ENCODE measurements at regions of chr12 and their contacts with region 1.

Region 1: DNA sequence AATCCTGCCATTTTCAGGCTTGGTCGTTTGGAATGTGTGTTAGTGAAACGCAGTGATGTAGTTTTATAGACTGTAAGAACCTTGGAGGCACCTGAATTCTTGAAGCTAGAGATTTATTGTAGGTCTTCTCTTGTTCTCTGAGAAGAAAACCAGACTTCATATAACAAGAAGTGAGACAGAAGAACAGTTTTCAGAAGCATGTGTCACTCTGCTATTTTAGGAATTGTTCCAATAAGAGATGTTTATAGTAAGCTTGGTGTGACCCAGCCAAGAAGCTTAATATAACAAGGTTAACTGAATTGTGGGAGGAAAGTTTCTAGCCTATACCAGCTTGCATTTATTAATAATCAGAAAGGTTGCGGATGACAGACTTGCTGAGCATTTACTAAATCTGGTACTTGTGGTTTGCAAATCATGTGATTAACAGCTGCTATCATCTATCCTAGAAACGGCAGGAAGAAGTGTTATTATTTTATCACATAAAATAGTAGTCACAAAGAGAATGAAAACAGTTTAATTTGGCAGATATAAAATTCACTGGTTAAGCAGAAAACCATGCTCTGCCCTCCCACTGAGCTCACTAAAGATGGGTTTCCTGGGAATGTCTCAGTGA is 49.2 kb upstream of the BCAT1 start:
- DNase-seq: no peak
- ATAC-seq: peak; percentile 54
- H3K4me3 ChIP-seq: no peak overlapping the region
- H3K27ac ChIP-seq: no peak overlapping the region
- H3K4me1 ChIP-seq: no peaks in the 10 kb centered on the region
- H3K27me3 ChIP-seq: no peaks in the 10 kb centered on the region

Region 2: GRCh38 chr12:24788886-24789285 is 209.2 kb before region 1 on chr12:
- intact Hi-C with region 1: no loop called
- DNase-seq: no peak
- ATAC-seq: no peak
- H3K4me3 ChIP-seq: no peak overlapping the region
- H3K27ac ChIP-seq: no peak overlapping the region
- H3K4me1 ChIP-seq: no peaks in the 10 kb centered on the region
- H3K27me3 ChIP-seq: no peaks in the 10 kb centered on the region

Region 3: DNA sequence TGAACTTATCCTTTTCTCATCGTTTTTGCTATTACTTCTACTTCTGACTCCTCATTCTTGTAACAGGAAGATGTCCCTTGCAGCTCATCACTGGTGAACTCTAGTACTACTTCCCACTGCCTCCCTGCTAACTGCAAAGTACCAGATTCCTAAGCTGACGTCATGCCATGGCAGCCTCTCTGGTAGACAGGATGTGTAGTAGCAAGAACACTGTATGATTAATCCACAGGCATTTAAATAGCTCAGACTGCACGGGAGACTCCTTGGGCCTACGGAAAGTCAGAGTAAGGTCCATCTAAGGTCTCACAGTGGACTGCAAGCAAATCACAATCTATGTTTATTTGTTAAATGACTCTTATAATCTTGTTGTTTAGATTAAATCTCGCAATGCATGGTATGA is 153.4 kb after region 1 on chr12:
- intact Hi-C with region 1: loop called in 1 of 2 experiments (anchors 5 kb)
- DNase-seq: peak; percentile 90
- ATAC-seq: peak; percentile 86
- H3K4me3 ChIP-seq: no peak overlapping the region
- H3K27ac ChIP-seq: no peak overlapping the region
- H3K4me1 ChIP-seq: no peaks in the 10 kb centered on the region
- H3K27me3 ChIP-seq: no peaks in the 10 kb centered on the region

Region 4: DNA sequence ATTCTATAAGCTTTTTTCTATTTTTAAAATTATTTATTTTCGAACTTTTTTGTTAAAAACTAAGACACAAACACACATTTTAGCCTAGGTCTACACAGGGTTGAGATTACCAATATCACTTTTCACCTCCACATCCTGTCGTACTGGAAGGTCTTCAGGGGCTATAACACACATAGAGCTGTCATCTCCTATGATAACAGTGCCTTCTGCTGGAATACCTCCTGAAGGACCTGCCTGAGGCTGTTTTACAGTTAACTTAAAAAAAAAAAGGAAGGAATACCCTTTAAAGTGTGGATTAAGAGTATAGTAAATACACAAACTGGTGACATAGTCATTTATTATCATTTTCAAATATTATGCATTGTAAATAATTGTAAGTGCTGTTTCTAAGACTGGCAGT is 1003.5 kb after region 1 on chr12:
- intact Hi-C with region 1: loop called in 1 of 2 experiments (anchors 5 kb)
- DNase-seq: no peak
- ATAC-seq: no peak
- H3K4me3 ChIP-seq: no peak overlapping the region
- H3K27ac ChIP-seq: no peak overlapping the region
- H3K4me1 ChIP-seq: no peaks in the 10 kb centered on the region
- H3K27me3 ChIP-seq: no peaks in the 10 kb centered on the region